ENCODE measurements at regions of chr17 and their contacts with region 1.

Region 1: DNA sequence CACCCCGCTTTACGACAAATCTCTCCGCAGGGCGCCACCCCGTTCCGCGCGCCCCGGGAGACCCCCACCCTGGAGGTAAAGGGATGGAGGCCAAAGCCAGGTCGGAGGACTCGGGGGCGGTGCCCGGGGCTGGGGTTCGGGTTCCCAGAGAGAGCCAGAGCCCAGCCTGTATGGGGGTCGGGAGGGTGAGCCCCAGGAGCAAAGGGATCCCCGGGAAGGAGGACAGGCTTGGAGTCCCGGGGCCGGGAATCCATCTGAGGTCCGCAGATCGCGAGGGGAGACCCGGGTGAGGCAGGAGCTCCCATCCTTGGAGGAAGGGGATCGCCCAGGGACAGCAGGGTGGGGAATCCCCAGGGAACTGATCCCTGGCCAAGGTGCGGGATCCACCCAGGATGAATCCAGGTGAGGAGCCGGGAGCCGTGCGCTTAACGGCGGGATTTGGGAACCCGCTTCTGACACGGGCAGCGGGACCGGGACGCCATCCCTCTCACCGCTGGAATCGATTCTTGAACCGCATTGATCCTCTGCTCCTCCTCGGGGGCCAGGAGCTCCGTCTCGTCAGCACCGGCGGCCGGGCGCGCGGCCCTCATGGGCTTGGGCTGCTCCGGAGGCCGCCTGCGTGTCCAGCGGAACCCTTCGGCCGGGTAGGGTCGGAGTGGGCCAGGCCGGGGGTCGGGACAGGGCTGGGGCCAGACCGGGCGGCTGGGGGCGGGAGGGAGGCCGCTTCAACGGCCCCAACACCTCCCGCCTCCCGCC is at the start of gene MMD:
- H3K4me3 Mint-ChIP-seq: peak within 1 kb of the TSS; percentile 82
- H3K27ac Mint-ChIP-seq: peak within 1 kb of the TSS; percentile 88
- H3K4me1 Mint-ChIP-seq: peaks cover 78% of the 10 kb centered on the region
- H3K27me3 Mint-ChIP-seq: peaks cover 29% of the 10 kb centered on the region

Region 2: GRCh38 chr17:55303701-55304145 is 117.6 kb before region 1 on chr17:
- intact Hi-C with region 1: no loop called
- H3K4me3 Mint-ChIP-seq: no peak overlapping the region
- H3K27ac Mint-ChIP-seq: no peak overlapping the region
- H3K4me1 Mint-ChIP-seq: no peaks in the 10 kb centered on the region
- H3K27me3 Mint-ChIP-seq: no peaks in the 10 kb centered on the region

Region 3: DNA sequence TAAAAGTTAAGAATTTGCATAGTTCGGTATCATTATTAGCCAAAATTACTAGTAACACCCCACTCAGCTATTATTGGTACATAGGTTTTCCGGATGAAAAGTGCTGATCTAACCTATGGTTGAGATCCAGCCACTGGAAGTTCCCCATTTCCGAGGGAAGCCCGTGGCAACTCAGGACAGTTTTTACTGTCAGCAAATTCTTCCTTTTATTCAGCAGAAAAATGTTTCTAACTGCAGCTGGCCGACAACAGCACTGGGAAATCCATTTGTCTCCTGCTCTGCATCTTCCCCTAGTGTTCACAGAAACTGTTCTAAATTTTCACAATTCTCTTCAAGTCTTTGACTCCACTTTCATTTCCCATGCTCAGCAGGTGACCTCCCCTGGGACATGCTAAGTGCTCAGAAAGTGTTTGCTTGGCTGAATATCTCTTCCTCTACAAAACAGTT is 15.8 kb after region 1 on chr17:
- intact Hi-C with region 1: loop called (anchors 2 kb)
- H3K4me3 Mint-ChIP-seq: peak overlapping the region; percentile 53
- H3K27ac Mint-ChIP-seq: peak overlapping the region; percentile 92
- H3K4me1 Mint-ChIP-seq: peaks cover 43% of the 10 kb centered on the region
- H3K27me3 Mint-ChIP-seq: peaks cover 6% of the 10 kb centered on the region

Region 4: DNA sequence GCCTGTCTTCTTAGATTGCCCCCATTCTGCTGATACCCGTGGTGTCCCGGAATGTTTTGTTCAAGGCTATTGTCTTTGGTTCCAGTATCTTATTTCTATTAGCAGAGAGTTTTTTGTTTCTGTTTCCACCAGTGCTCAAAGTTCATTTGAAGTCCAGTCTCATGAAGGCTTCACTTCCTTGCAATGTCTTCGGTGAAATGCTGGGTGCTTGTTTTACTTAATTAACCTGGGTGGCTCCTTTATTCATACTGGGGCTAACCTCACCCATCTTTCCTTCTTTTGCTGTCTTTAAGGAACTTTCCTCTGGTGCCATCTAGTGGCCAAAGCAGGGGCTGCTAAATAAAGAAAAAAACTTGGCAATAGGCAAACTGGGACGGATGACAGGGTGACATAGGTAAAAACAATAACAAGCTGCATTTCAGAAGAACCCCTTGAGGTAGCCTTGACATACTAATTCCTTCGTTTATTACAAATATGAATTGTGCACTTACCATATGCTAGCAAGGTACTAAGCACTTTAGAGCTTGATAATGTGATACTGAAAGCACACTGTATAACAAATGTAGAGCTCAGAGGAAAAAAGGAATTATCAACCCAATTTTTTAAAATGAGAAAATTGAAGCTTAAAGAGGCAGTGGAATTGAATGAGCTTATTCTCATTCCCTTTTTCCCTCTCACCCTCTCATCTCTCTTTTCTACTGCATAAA is 92.7 kb after region 1 on chr17:
- intact Hi-C with region 1: loop called (anchors 5 kb)
- H3K4me3 Mint-ChIP-seq: no peak overlapping the region
- H3K27ac Mint-ChIP-seq: no peak overlapping the region
- H3K4me1 Mint-ChIP-seq: no peaks in the 10 kb centered on the region
- H3K27me3 Mint-ChIP-seq: no peaks in the 10 kb centered on the region

Measured in dendritic cell treated with granulocyte-macrophage colony-stimulating factor and Interleukin-4, amounts not matched to agents 40 ng/mL and 50 ng/mL, for 4 days (primary cell).